Heart right ventricle (tissue), 16 donors: ENCODE measurements at regions of chr1 and their contacts with region 1.

Region 1: GRCh38 chr1:17515922-17516618 is 23.4 kb upstream of the ARHGEF10L start:
- DNase-seq: no peak
- ATAC-seq: peak in 4 of 8 donors; percentile 20 to 31 (median 22)
- H3K4me3 ChIP-seq: no peak overlapping the region
- H3K27ac ChIP-seq: no peak overlapping the region
- H3K4me1 ChIP-seq: no peaks in the 10 kb centered on the region
- H3K27me3 ChIP-seq: peaks cover 0 to 12% (median 3%) of the 10 kb centered on the region in 7 donors
- CTCF ChIP-seq: no peak

Region 2: DNA sequence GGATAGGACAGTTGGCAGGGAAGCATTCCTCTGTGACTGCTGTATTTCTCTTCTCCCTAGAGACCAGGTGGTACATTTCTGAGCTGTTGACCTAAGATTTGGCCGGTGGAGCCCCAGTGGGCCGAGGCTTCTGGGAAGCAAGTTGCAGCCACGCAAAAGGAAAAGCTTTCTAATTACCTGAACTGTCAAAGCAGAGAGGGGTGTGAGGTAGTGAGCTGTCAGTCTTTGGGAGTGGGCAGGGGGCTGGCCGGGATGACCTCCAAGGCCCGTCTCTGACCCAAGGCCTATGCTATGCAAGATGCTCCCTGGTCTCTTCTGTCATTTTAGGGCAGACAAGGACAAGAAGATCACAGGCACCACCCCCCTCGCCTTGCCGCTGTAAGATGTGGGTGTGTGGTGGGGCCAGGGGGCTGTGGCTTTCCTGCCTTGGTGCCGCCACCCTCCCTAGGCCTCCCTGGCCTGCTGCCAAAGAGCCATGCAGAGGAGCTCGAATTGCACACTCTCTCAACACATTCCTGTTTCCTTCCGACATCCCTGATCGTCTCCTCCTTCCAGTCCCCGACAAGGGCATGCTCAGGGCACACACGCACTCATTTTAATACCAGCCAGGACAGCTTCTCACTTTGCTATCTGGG is 303.5 kb before region 1 on chr1:
- intact Hi-C with region 1: no loop called
- DNase-seq: peak in 1 of 2 donors; percentile 25
- ATAC-seq: no peak
- H3K4me3 ChIP-seq: no peak overlapping the region
- H3K27ac ChIP-seq: no peak overlapping the region
- H3K4me1 ChIP-seq: peaks cover 0 to 20% (median 0%) of the 10 kb centered on the region in 9 donors
- H3K27me3 ChIP-seq: peaks cover 0 to 73% (median 52%) of the 10 kb centered on the region in 7 donors
- CTCF ChIP-seq: no peak

Region 3: DNA sequence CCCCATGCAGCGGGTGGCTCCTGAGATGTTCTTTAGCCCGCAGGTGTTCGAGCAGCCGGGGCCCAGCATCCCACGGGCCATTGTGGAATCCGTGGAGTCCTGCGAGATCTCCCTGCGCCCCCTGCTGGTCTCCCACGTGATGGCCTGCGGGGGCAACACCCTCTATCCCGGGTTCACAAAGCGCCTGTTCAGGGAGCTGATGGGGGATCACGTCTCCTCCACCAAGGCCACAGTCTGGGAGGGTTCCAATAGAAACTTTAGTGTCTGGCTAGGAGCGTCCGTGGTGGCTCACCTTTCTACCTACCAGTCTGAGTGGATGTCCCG is 310.1 kb after region 1 on chr1:
- intact Hi-C with region 1: loop called in 1 of 10 experiments (anchors 10 kb)
- DNase-seq: peak in 1 of 2 donors; percentile 57
- ATAC-seq: peak in 7 of 8 donors; percentile 19 to 45 (median 30)
- H3K4me3 ChIP-seq: no peak overlapping the region
- H3K27ac ChIP-seq: no peak overlapping the region
- H3K4me1 ChIP-seq: peaks cover 0 to 17% (median 0%) of the 10 kb centered on the region in 9 donors
- H3K27me3 ChIP-seq: peaks cover 0 to 29% (median 7%) of the 10 kb centered on the region in 7 donors
- CTCF ChIP-seq: peak; percentile 35 to 71 (median 62)